Activated CD4-positive, alpha-beta T cell treated with anti-CD3 and anti-CD28 coated beads for 36 hours (primary cell): ENCODE measurements at regions of chr2 and their contacts with region 1.

Region 1: GRCh38 chr2:223944703-223945531 is at the start of gene WDFY1:
- DNase-seq: peak; percentile 90
- ATAC-seq: peak; percentile 52
- H3K4me3 Mint-ChIP-seq: peak within 1 kb of the TSS; percentile 90
- H3K27ac Mint-ChIP-seq: peak within 1 kb of the TSS; percentile 90
- H3K4me1 Mint-ChIP-seq: peaks cover 62% of the 10 kb centered on the region
- H3K27me3 Mint-ChIP-seq: peaks cover 1% of the 10 kb centered on the region
- total RNA-seq, gene WDFY1: 33.6 to 37.5 TPM

Region 2: DNA sequence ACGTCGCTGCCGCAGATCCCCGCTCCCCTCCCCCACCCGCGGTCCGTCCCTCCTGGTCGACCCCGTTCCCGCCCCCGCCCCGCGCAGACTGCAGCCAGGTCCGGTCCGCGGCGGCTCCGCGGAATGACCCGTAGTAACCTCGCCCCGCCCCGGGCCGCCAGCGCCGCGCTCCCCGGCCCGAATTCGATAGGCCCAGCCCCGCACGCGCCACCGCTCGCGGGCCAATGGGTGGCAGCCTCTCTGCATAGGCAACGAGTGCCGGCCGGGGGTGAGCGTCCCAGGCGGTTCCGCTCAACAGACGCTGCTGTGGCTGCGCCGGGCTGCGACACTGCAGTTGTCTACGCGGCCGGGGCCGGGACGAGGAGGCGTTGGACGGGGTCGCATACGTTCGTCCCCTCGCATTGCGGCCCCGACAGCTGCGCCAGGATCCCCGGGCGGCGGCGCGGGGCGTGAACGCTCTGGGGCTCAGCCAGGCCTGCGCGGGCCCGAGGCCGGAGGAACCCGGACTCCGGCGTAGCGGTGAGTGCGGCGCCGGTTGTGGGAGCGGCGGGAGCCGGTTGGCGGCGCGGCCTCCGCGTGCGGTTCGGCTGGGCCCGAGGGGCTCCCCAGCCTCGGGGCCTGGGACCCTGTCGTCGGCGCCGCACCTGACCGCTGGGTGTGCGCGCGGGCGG is 1084.0 kb before region 1 on chr2 and contains the start of gene ACSL3:
- CTCF ChIA-PET with region 1: no interaction called
- POLR2A ChIA-PET with region 1: no interaction called
- intact Hi-C with region 1: loop called in 1 of 2 experiments (anchors 5 kb)
- DNase-seq: peak; percentile 97
- ATAC-seq: peak; percentile 100
- H3K4me3 Mint-ChIP-seq: peak within 1 kb of the TSS; percentile 67
- H3K27ac Mint-ChIP-seq: peak within 1 kb of the TSS; percentile 91
- H3K4me1 Mint-ChIP-seq: peaks cover 9% of the 10 kb centered on the region
- H3K27me3 Mint-ChIP-seq: peaks cover 4% of the 10 kb centered on the region
- total RNA-seq, gene ACSL3: 46.2 to 48.8 TPM

Region 3: GRCh38 chr2:223712642-223713041 is 232.3 kb before region 1 on chr2:
- CTCF ChIA-PET with region 1: no interaction called
- POLR2A ChIA-PET with region 1: no interaction called
- intact Hi-C with region 1: no loop called
- DNase-seq: no peak
- ATAC-seq: no peak
- H3K4me3 Mint-ChIP-seq: no peak overlapping the region
- H3K27ac Mint-ChIP-seq: no peak overlapping the region
- H3K4me1 Mint-ChIP-seq: peaks cover 2% of the 10 kb centered on the region
- H3K27me3 Mint-ChIP-seq: peaks cover 4% of the 10 kb centered on the region

Region 4: GRCh38 chr2:223760838-223761502 is 183.9 kb before region 1 on chr2:
- CTCF ChIA-PET with region 1: interaction called, 3 read pairs
- POLR2A ChIA-PET with region 1: no interaction called
- intact Hi-C with region 1: loop called in 1 of 2 experiments (anchors 2 kb)
- DNase-seq: peak; percentile 76
- ATAC-seq: peak; percentile 93
- H3K4me3 Mint-ChIP-seq: no peak overlapping the region
- H3K27ac Mint-ChIP-seq: peak overlapping the region; percentile 73
- H3K4me1 Mint-ChIP-seq: peaks cover 22% of the 10 kb centered on the region
- H3K27me3 Mint-ChIP-seq: no peaks in the 10 kb centered on the region

Region 5: GRCh38 chr2:223976635-223977226 is 31.8 kb after region 1 on chr2:
- CTCF ChIA-PET with region 1: no interaction called
- POLR2A ChIA-PET with region 1: no interaction called
- intact Hi-C with region 1: no loop called
- DNase-seq: no peak
- ATAC-seq: peak; percentile 16
- H3K4me3 Mint-ChIP-seq: no peak overlapping the region
- H3K27ac Mint-ChIP-seq: no peak overlapping the region
- H3K4me1 Mint-ChIP-seq: no peaks in the 10 kb centered on the region
- H3K27me3 Mint-ChIP-seq: no peaks in the 10 kb centered on the region

Region 6: GRCh38 chr2:224666951-224667553 is 722.1 kb after region 1 on chr2:
- CTCF ChIA-PET with region 1: no interaction called
- POLR2A ChIA-PET with region 1: interaction called, 11 read pairs
- intact Hi-C with region 1: no loop called
- DNase-seq: no peak
- ATAC-seq: no peak
- H3K4me3 Mint-ChIP-seq: no peak overlapping the region
- H3K27ac Mint-ChIP-seq: no peak overlapping the region
- H3K4me1 Mint-ChIP-seq: peaks cover 2% of the 10 kb centered on the region
- H3K27me3 Mint-ChIP-seq: no peaks in the 10 kb centered on the region